ENCODE measurements at regions of chr3 and their contacts with region 1.

Region 1: DNA sequence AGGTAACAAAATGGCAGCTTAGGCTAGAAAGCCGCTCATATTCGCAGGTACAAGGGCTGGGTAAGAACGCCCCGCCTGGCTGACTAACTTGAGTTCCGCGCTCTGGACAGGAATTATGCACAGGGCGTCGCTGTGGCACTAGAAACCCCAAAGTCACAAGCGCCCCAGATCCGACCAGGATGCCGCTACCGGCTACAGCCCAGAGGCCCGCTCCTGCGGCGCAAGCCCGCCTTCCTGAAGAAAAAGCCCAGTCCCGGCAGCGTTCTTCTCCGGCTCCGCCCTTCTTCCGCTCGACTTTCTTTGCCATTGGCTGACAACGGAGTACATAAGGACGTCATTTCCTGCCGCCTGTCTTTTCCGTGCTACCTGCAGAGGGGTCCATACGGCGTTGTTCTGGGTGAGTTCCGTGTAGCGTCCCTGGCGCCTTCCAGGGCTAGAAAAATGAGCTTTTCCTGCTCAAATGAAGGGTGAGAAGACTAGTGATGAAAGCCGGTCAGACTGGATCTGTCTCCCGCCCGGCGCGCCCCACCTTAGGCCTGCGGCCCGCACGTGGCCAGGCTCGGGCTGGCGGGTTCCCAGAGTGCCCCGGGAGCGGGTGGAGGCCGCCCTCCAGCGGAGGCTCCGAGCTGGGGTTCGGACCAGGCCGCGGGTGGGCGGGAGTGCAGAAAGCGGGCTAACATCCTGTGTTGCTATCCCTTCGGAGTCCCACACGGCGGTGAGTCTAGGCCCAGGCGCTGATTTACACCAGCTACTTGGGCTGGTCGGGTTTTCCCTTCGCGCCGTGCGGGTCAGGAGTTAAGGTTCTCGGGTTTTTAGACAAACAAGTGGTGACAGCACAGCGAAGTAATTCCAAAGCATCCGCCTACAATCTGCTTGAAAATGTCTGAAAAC is at the start of gene RPSA:
- DNase-seq: peak; percentile 96
- ATAC-seq: peak; percentile 85
- H3K4me3 Mint-ChIP-seq: peak within 1 kb of the TSS; percentile 88
- H3K27ac Mint-ChIP-seq: peak within 1 kb of the TSS; percentile 99
- H3K4me1 Mint-ChIP-seq: peaks cover 59% of the 10 kb centered on the region
- H3K27me3 Mint-ChIP-seq: no peaks in the 10 kb centered on the region
- CTCF ChIP-seq: no peak
- total RNA-seq, gene RPSA: 2,455 to 2,509 TPM (median 2,505 TPM) in 3 replicates

Region 2: DNA sequence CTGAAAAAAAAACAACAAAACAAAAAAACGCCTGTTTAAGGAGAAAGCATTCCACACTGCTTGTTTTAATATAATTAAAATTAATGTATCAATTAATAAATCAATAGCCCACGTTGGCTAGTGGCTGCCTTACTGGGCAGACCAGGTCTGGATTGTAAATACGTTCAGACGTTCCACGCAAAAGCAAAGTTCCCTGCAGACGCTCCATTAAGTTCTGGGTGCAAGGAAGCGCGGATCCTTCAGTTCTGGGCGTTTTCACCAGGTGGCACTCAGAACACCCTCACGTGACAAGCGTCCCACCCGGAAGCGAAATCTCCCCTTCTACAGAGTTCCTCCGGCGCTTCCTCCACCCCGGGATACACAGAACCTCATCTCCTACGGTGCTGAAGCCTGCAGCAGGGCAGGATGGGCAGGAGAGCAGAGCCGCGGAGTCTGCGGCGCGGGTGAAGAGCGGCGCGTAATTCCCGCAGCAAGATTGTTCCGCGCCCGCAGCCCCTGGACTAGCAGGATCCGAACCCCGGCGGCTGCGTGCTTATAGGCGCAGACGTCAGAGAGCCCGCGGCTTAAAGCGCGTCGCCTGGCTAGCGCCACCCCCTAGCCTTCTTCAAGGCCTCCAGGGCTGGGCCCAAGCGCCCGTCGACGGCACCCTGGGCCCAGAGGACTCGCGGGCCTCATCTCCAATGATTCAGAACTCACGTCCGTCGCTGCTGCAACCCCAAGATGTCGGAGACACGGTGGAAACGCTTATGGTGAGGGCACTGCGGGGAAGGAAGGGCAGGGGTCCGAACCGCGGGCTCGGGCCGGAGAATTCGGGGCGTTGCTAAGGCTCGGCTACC is 23.4 kb before region 1 on chr3 and contains the start of gene SLC25A38:
- CTCF ChIA-PET with region 1: interaction called, 9 read pairs
- POLR2A ChIA-PET with region 1: interaction called, 24 read pairs
- DNase-seq: peak; percentile 76
- ATAC-seq: peak; percentile 76
- H3K4me3 Mint-ChIP-seq: peak within 1 kb of the TSS; percentile 97
- H3K27ac Mint-ChIP-seq: peak within 1 kb of the TSS; percentile 98
- H3K4me1 Mint-ChIP-seq: peaks cover 31% of the 10 kb centered on the region
- H3K27me3 Mint-ChIP-seq: no peaks in the 10 kb centered on the region
- CTCF ChIP-seq: no peak
- total RNA-seq, gene SLC25A38: 34.9 to 37.3 TPM (median 36.7 TPM) in 3 replicates

Measured in WTC11 (cell line).